Activated naive CD4-positive, alpha-beta T cell treated with anti-CD3 and anti-CD28 coated beads for 36 hours (primary cell): ENCODE measurements at regions of chr1 and their contacts with region 1.

Region 1: DNA sequence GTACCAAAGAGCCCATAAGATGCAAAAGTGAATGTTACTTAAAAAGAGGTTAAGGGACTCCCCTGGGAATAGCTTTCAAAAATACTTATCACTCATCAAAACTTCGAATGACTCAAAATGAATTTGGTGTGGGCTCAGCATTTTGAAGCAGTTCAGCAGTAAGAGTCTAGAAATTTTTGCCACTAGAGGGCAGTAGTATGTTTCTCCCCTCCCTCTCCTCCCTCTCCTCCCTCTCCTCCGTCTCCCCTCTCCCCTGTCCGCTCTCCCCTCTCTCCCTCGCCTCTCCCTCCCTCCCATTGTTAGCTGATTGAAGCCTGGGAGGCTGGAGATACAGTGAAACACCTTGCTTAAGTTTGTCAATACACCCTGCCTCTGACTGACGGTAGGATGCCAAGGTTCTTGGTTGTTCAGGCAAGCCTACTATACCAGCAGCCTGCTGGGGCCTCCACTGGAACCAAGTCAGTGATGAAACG is 70.8 kb upstream of the TENT5C start:
- DNase-seq: peak; percentile 50
- H3K4me3 Mint-ChIP-seq: no peak overlapping the region
- H3K27ac Mint-ChIP-seq: no peak overlapping the region
- H3K4me1 Mint-ChIP-seq: peaks cover 23% of the 10 kb centered on the region
- H3K27me3 Mint-ChIP-seq: no peaks in the 10 kb centered on the region

Region 2: GRCh38 chr1:116372587-116373444 is 1162.2 kb before region 1 on chr1 and contains the start of gene ATP1A1:
- CTCF ChIA-PET with region 1: no interaction called
- intact Hi-C with region 1: loop called (anchors 10 kb)
- DNase-seq: peak; percentile 98
- H3K4me3 Mint-ChIP-seq: peak within 1 kb of the TSS; percentile 92
- H3K27ac Mint-ChIP-seq: peak within 1 kb of the TSS; percentile 95
- H3K4me1 Mint-ChIP-seq: peaks cover 30% of the 10 kb centered on the region
- H3K27me3 Mint-ChIP-seq: no peaks in the 10 kb centered on the region
- total RNA-seq, gene ATP1A1: 360 to 370 TPM

Region 3: GRCh38 chr1:117367047-117368018 is 167.7 kb before region 1 on chr1 and contains the start of gene MAN1A2:
- CTCF ChIA-PET with region 1: no interaction called
- intact Hi-C with region 1: loop called (anchors 1 kb)
- DNase-seq: peak; percentile 76
- H3K4me3 Mint-ChIP-seq: peak within 1 kb of the TSS; percentile 94
- H3K27ac Mint-ChIP-seq: peak within 1 kb of the TSS; percentile 94
- H3K4me1 Mint-ChIP-seq: peaks cover 48% of the 10 kb centered on the region
- H3K27me3 Mint-ChIP-seq: no peaks in the 10 kb centered on the region
- total RNA-seq, gene MAN1A2: 14.6 to 17.4 TPM

Region 4: DNA sequence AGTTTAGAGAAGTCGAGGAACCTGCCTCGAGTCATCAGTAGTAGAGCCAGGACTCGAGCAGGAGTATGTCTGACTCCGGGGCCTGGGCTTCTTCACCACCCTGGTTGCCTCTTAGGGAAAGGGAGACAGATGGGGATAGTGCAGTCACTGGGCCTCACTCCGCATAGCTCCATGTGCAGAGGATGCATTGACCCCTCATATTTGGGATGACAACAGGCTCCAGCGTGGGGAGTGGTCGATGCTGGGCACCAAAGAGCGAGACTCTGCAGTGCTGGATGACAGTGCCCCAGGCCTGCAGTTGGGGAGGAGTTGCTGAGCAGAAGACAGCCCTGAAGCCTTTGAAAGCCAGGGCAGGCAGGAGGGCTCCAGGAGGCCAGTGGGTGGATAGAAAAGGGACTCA is 50.1 kb after region 1 on chr1:
- CTCF ChIA-PET with region 1: no interaction called
- intact Hi-C with region 1: no loop called
- DNase-seq: no peak
- H3K4me3 Mint-ChIP-seq: no peak overlapping the region
- H3K27ac Mint-ChIP-seq: no peak overlapping the region
- H3K4me1 Mint-ChIP-seq: no peaks in the 10 kb centered on the region
- H3K27me3 Mint-ChIP-seq: peaks cover 2% of the 10 kb centered on the region

Region 5: DNA sequence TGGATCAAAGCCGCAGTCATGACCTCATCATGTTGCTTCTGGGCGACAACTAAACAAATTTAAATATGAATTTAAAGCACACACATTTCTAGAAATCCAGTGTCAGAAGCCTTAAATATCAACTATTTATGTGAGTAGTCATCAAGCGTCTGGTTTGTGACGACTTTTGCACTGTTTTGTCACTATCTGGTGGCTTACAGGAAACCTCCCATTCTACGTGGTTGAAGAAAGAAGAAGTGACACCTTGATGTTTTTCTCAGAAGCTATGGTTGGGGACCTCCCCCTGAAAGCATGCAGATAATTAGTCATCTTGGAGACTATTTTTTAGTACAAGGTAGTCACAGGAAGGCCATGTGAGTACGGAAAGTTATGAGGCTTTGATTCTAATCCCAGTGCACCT is 129.3 kb after region 1 on chr1:
- CTCF ChIA-PET with region 1: interaction called, 24 read pairs
- intact Hi-C with region 1: loop called (anchors 1 kb)
- DNase-seq: peak; percentile 89
- H3K4me3 Mint-ChIP-seq: no peak overlapping the region
- H3K27ac Mint-ChIP-seq: peak overlapping the region; percentile 71
- H3K4me1 Mint-ChIP-seq: peaks cover 71% of the 10 kb centered on the region
- H3K27me3 Mint-ChIP-seq: peaks cover 6% of the 10 kb centered on the region

Region 6: GRCh38 chr1:117753654-117754054 is 218.6 kb after region 1 on chr1:
- CTCF ChIA-PET with region 1: interaction called, 244 read pairs
- intact Hi-C with region 1: loop called (anchors 1 kb)
- DNase-seq: no peak
- H3K4me3 Mint-ChIP-seq: no peak overlapping the region
- H3K27ac Mint-ChIP-seq: no peak overlapping the region
- H3K4me1 Mint-ChIP-seq: peaks cover 13% of the 10 kb centered on the region
- H3K27me3 Mint-ChIP-seq: peaks cover 16% of the 10 kb centered on the region

Region 7: GRCh38 chr1:117942293-117942692 is 407.3 kb after region 1 on chr1:
- CTCF ChIA-PET with region 1: interaction called, 10 read pairs
- intact Hi-C with region 1: no loop called
- DNase-seq: no peak
- H3K4me3 Mint-ChIP-seq: no peak overlapping the region
- H3K27ac Mint-ChIP-seq: no peak overlapping the region
- H3K4me1 Mint-ChIP-seq: no peaks in the 10 kb centered on the region
- H3K27me3 Mint-ChIP-seq: no peaks in the 10 kb centered on the region